Gastrocnemius medialis (tissue), 4 donors: ENCODE measurements at regions of chr18 and their contacts with region 1.

Region 1: DNA sequence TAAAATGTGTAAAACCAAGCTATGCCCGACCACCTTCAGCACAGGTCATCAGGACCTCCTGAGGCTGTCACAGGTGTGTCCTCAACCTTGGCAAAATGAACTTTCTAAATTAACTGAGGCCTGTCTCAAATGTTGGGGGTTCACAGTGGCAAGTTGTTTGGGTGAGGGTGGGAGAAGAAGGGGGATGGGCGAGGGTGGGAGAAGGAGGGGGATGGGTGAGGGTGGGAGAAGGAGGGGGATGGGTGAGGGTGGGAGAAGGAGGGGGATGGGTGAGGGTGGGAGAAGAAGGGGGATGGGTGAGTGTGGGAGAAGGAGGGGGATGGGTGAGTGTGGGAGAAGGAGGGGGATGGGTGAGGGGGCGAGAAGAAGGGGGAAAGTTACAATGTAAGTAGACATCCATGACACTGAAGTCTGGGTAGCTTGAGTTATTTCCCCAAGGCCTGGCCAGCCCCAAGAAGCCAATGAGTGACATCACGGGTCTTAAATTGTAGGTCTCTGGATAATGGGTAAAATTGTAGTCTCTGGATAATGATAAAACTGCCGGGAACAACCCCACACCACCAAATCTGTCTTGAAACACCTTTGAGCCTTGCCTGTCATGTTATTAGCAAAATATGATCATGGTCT is 56.3 kb downstream of the TIMM21 start:
- DNase-seq: no peak
- ATAC-seq: no peak
- H3K4me3 ChIP-seq: no peak overlapping the region
- H3K27ac ChIP-seq: no peak overlapping the region
- H3K4me1 ChIP-seq: no peaks in the 10 kb centered on the region
- H3K27me3 ChIP-seq: no peaks in the 10 kb centered on the region
- CTCF ChIP-seq: no peak
- POLR2A ChIP-seq: no peak

Region 2: DNA sequence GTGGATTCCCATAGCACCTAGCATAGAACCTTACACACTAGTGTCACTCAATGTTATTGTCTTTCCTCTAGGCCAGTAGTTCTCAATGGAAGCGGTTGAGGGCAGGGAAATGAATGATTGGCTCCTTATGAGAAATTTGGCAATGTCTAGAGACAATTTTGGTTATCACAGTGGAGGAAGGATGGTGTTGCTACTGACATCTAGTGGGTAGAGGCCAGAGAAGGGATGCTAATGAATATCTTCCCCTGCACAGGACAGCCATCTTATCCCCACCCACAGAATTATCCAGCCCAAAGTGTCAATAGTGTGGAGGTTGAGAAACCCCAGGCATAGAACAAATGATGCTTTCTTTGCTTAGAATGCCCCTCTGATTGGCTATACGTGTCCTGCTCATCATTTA is 126.8 kb after region 1 on chr18:
- in situ Hi-C with region 1: loop called in 1 of 4 experiments (anchors 10 kb)
- intact Hi-C with region 1: no loop called
- DNase-seq: no peak
- ATAC-seq: no peak
- H3K4me3 ChIP-seq: no peak overlapping the region
- H3K27ac ChIP-seq: no peak overlapping the region
- H3K4me1 ChIP-seq: no peaks in the 10 kb centered on the region
- H3K27me3 ChIP-seq: no peaks in the 10 kb centered on the region
- CTCF ChIP-seq: no peak
- POLR2A ChIP-seq: no peak